Esophagus muscularis mucosa (tissue), 4 donors: ENCODE measurements at regions of chr17 and their contacts with region 1.

Region 1: DNA sequence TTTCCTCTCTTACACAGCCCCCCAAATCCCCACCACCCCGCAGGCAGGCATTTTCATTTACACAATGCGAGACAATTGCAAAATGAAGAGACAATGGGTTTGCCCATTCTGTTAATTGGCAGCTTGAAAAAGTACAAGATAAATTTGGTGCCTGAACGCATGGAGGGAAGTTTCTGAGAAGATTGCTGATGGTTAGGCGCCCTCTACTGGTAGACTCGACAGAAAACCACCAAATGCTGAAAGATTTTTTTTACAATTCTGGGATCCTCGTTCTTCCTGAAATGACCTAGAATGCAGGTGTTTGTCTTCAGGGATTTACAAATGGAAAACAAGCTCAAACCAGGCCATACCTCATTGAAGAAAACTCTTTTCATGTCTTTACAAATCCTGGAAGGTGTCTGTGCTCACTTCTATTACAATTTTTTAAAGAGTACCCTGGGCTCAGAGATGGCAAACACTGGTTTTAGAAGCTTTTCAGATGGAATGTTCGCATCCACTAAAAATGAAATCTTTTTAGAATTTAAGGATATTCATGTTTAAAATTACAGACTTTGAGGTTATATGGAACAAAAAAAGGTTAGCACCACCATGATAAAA is 338.5 kb downstream of the PMP22 start:
- DNase-seq: no peak
- H3K4me3 ChIP-seq: no peak overlapping the region
- H3K27ac ChIP-seq: no peak overlapping the region
- H3K4me1 ChIP-seq: no peaks in the 10 kb centered on the region
- H3K27me3 ChIP-seq: peaks cover 0 to 24% (median 0%) of the 10 kb centered on the region in 4 donors
- CTCF ChIP-seq: peak; percentile 66 to 74 (median 73)
- EP300 ChIP-seq: no peak
- POLR2A ChIP-seq: no peak

Region 2: DNA sequence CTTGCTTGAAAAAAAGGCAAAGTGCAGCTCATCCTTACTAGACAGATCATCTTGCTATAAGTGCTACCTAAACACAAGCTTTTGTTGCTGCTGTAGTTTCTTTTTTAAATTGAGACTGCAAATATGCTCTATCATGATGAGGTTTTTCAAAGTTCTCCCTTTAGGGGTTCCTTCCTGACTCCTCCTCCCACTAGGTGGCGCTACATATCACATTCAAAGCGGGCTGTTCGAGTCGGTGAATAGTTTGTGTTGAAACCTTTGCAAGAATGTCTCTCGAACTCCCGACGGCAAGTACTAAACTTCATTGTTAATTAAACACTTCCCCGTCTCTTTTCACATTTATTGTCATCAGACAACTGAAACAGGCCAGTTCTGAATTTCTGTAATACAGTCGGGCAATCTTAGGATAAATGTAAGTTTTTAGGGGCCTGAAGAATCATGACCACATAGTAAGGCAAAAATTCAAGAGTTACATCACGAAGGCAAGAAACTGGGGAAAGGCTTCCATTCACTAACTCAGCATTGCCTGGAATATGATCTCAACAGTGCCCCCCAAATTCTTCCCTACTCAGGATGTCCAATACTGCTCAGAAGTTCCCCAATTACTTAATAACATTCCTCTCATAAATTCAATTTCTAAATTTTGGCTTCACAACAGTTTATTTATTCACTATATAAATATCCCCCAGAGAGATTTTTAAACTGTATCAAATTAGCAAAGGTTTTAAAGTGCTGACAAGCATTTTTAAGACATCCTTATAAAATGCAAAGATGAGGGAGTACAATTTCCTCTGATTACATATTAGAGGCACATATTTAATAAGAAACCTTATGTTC is 1331.6 kb before region 1 on chr17:
- intact Hi-C with region 1: loop called (anchors 5 kb)
- DNase-seq: no peak
- H3K4me3 ChIP-seq: no peak overlapping the region
- H3K27ac ChIP-seq: peak overlapping the region in 3 of 4 donors; percentile 1 to 37 (median 35)
- H3K4me1 ChIP-seq: peaks cover 0 to 4% (median 0%) of the 10 kb centered on the region in 4 donors
- H3K27me3 ChIP-seq: peaks cover 0 to 50% (median 5%) of the 10 kb centered on the region in 4 donors
- CTCF ChIP-seq: peak; percentile 80 to 92 (median 91)
- EP300 ChIP-seq: no peak
- POLR2A ChIP-seq: no peak

Region 3: DNA sequence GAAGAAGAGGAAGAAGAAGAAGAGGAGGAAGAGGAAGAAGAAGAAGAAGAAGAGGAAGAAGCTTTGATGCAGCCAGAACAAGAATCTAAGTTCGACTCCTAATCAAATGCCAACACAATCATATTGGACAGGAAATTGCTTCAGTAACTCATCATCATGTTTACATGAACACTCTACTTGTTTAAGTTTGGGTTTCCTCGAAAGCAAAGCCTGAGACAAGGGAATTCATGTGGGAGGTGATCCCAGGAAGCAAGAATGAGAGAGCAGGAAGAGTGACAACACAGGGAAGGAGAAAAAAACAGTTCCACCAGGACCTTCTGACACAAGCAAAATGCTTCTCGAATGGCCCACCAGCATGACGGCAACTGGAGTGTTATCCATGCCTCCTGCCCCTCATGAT is 59.5 kb after region 1 on chr17:
- intact Hi-C with region 1: loop called (anchors 10 kb)
- DNase-seq: no peak
- H3K4me3 ChIP-seq: no peak overlapping the region
- H3K27ac ChIP-seq: no peak overlapping the region
- H3K4me1 ChIP-seq: no peaks in the 10 kb centered on the region
- H3K27me3 ChIP-seq: peaks cover 0 to 9% (median 0%) of the 10 kb centered on the region in 4 donors
- CTCF ChIP-seq: no peak
- EP300 ChIP-seq: no peak
- POLR2A ChIP-seq: no peak